OCI-LY7 (cell line): ENCODE measurements at regions of chr10 and their contacts with region 1.

Region 1: DNA sequence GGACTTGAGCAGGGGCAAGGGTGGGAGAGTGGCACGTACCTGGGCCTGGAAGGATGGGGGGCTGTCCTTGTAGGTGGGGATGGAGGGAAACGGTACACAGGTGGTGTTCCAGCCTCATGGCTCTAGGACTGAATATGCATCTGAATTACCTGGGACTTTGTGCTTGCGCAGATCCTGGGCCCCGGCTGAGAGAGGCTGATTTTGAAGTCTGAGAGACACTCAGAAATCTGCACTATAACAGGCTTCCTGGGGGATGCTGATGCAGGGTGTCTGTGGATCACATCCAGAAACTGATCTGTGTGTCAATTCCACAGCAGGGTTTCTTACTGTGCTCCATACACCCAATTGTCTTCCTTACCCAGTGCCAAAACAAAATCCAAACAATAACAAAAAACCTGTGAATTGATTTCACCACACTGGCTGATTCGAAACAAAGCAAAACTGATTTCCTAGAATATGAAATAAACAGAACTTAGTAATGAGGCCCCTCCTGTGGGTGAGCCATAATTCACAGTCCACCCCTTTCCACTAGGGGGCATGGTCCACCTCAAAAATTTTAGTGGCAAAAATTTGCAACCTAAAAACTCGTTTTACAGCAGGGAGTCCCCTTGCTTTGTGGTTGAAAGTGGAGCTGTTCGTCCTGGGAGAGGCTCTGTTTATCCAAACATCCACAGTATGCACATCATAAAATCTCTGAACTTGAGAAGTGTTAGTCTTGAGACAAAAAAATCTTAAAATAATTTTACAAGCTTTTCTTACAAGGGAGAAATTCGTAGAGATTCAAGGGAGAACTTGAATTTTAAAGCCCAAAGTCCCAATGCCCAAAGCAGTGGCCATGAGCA is 32.0 kb upstream of the PLEKHA1 start:
- DNase-seq: peak; percentile 77
- H3K4me3 ChIP-seq: no peak overlapping the region
- H3K27ac ChIP-seq: no peak overlapping the region
- H3K4me1 ChIP-seq: peaks cover 23% of the 10 kb centered on the region
- CTCF ChIP-seq: peak; percentile 96

Region 2: DNA sequence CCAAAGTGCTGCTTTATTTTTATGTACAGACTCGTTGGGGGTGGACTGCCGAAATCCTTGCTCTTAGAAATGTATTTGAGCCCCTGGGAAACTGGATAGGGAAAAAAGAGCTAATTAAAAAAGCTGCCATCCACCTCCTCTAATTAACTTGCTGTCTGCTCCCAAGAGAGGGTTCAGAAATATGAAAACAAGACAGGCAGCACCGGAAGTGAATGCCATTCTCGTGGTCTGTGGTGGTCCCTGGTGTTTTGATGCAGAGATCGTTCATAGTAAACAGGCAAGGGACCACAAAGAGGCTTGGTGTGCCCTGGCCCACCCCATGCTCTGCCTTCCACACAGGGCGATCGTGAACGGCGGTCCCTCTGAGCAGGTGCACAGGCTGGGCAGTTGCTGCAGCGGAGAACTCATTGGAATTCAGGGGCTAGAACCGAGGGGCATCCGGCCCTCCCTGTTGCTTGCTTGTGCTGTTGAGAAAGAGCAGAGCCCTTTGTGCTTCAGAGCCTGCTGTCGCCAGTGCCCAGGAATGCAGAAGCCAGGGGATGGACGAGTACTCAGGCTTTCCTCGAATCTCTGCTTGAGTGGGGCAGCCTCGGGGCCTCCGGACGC is 150.5 kb before region 1 on chr10:
- CTCF ChIA-PET with region 1: no interaction called
- POLR2A ChIA-PET with region 1: no interaction called
- intact Hi-C with region 1: no loop called
- DNase-seq: no peak
- H3K4me3 ChIP-seq: no peak overlapping the region
- H3K27ac ChIP-seq: no peak overlapping the region
- H3K4me1 ChIP-seq: no peaks in the 10 kb centered on the region
- CTCF ChIP-seq: no peak

Region 3: DNA sequence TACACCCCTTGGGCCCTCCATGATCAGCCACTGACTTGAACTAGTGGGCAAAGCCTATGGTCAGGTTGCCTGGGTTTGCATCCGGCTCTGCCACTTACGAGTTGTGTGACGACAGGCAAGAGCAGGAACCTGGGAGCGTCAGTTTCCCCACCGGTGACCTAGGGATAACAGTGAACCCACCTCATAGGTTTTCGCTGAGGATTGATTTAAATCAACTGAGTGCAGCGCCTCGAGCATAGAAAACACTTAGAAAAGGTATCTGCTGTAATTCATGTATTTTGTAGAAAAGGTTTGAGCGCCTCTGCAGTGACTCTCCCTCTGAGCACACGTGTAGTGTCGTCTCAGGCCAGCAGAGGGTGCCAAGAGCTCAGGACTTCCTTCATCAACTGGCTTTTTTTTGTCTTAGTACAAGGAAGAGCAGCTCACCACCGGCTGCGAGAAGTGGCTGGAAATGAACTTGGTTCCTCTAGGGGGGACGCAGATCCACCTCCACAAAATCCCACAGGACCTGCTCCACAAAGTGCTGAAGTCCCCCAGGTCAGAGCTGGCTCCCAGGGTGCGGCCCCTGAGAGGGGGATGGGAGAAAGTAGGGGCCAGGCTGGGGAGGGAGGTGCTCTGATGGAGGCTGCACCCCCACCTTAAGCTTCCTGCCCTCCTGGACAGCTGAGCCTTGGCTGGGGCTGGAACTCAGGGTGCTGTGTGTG is 43.8 kb before region 1 on chr10:
- CTCF ChIA-PET with region 1: no interaction called
- POLR2A ChIA-PET with region 1: interaction called, 4 read pairs
- intact Hi-C with region 1: loop called (anchors 1 kb)
- DNase-seq: peak; percentile 84
- H3K4me3 ChIP-seq: peak overlapping the region; percentile 37
- H3K27ac ChIP-seq: no peak overlapping the region
- H3K4me1 ChIP-seq: peaks cover 8% of the 10 kb centered on the region
- CTCF ChIP-seq: peak; percentile 95

Region 4: DNA sequence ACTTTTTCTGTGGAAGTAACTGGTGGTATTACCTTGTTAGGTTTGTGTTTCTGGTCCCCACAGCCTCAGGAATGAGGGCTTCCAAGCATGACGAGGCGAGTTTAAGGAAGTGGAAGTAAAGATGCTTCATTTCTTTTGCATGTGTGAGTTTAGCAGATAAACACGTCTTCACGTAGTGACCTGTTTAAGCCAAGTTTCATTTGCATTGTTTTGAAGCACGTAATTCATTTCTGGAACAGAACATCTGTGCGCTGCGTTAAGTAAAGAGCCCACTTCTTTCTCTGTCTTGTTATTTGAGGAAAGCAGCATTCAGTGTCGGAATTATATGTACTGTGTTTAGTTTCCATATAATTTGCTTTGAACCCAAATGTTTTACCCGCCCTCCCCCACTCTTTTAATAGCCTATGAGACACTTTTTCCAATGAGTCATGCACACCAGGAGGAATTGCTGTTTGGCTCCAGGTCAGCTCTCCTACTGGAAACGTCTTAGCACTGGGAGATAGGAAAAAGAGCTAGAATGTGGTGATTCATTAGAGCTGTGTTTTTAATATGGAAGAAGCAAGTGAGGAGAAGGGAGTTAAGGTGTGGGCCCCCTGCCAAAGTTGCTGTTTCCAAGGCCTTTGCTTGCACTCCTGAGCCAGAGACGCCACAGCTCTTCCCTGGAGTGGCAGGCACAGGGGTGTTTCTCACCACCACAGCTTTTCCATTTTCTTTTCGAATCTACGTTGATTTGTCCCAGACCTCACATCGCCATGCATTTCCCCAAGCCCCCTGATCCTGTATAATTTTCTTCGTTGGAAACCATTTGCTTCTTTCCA is 34.6 kb before region 1 on chr10:
- CTCF ChIA-PET with region 1: no interaction called
- POLR2A ChIA-PET with region 1: interaction called, 3 read pairs
- intact Hi-C with region 1: loop called (anchors 2 kb)
- DNase-seq: peak; percentile 82
- H3K4me3 ChIP-seq: peak overlapping the region; percentile 45
- H3K27ac ChIP-seq: peak overlapping the region; percentile 79
- H3K4me1 ChIP-seq: peaks cover 32% of the 10 kb centered on the region
- CTCF ChIP-seq: no peak

Region 5: GRCh38 chr10:122435212-122435827 is 92.8 kb after region 1 on chr10:
- CTCF ChIA-PET with region 1: interaction called, 3 read pairs
- POLR2A ChIA-PET with region 1: interaction called, 3 read pairs
- intact Hi-C with region 1: loop called (anchors 1 kb)
- DNase-seq: peak; percentile 76
- H3K4me3 ChIP-seq: no peak overlapping the region
- H3K27ac ChIP-seq: no peak overlapping the region
- H3K4me1 ChIP-seq: no peaks in the 10 kb centered on the region
- CTCF ChIP-seq: peak; percentile 97

Region 6: DNA sequence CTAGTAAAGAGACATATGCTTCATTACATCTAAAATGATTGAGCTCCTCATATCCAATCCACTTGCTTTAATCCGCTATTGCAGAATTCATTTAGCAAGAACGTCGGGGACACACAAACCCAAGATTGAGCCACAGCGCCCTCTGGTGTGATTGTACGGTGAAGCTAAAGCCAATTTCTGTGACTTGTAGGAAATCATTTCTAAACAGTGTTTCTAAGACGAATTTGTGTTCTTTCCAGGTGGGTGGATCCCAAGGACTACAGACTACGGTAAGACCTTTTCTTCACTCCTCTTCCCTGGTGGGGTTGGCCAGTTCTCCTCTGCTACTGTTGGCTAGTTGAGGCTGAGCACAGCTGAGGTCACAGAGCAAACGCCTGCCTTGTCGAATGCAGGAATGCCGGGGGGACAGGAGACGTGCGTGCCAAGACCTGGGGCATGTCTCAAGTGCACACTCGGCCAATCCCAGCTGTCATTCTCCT is 223.3 kb after region 1 on chr10:
- CTCF ChIA-PET with region 1: no interaction called
- POLR2A ChIA-PET with region 1: no interaction called
- intact Hi-C with region 1: loop called (anchors 1 kb)
- DNase-seq: peak; percentile 57
- H3K4me3 ChIP-seq: no peak overlapping the region
- H3K27ac ChIP-seq: no peak overlapping the region
- H3K4me1 ChIP-seq: no peaks in the 10 kb centered on the region
- CTCF ChIP-seq: peak; percentile 84

Region 7: GRCh38 chr10:124306922-124307371 is 1964.4 kb after region 1 on chr10:
- CTCF ChIA-PET with region 1: no interaction called
- POLR2A ChIA-PET with region 1: no interaction called
- intact Hi-C with region 1: no loop called
- DNase-seq: no peak
- H3K4me3 ChIP-seq: no peak overlapping the region
- H3K27ac ChIP-seq: no peak overlapping the region
- H3K4me1 ChIP-seq: no peaks in the 10 kb centered on the region
- CTCF ChIP-seq: no peak